Dendritic cell treated with granulocyte-macrophage colony-stimulating factor and Interleukin-4, amounts not matched to agents 40 ng/mL and 50 ng/mL, for 4 days (primary cell): ENCODE measurements at regions of chr3 and their contacts with region 1.

Region 1: DNA sequence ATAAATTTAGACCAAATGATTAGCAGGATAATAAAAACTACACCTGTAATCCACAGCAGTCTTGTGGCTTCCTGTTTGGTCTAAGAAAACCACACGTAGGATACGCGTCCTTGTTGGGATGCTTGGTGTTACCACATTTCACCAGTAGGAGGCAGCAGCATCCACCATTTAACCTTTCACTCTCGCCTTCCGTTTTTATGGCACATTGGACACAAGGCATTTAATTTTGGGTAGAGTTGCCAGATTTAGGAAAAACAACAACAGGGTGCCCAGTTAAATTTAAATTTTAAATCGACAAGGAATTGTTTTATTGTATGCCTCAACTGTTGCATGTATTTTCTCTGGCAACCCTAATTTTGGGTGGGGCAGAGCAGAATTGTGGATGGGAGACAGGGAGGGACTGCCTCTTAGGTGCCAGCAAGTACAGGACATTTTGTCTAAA is 6.3 kb downstream of the LRRC31 start:
- H3K4me3 Mint-ChIP-seq: no peak overlapping the region
- H3K27ac Mint-ChIP-seq: no peak overlapping the region
- H3K4me1 Mint-ChIP-seq: peaks cover 11% of the 10 kb centered on the region
- H3K27me3 Mint-ChIP-seq: peaks cover 9% of the 10 kb centered on the region

Region 2: DNA sequence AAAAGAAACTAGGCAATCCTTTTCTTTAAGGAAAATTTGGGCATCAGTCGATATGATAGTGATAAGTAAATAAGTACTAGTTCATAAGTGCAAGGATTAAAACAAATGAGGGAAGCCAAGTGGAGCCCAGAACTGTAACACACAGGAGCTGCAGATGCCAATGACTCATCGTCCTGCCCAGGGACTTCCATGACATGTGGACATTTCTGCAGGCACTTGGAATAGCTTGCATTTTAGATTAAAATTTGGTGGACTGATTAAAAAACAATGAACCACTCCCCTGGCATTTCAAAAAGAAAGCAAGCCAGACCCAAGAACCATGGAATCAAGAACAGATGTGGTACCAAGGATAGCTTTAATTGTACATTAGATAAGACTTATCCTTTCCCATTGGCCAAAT is 50.8 kb after region 1 on chr3:
- intact Hi-C with region 1: no loop called
- H3K4me3 Mint-ChIP-seq: no peak overlapping the region
- H3K27ac Mint-ChIP-seq: no peak overlapping the region
- H3K4me1 Mint-ChIP-seq: no peaks in the 10 kb centered on the region
- H3K27me3 Mint-ChIP-seq: no peaks in the 10 kb centered on the region

Region 3: DNA sequence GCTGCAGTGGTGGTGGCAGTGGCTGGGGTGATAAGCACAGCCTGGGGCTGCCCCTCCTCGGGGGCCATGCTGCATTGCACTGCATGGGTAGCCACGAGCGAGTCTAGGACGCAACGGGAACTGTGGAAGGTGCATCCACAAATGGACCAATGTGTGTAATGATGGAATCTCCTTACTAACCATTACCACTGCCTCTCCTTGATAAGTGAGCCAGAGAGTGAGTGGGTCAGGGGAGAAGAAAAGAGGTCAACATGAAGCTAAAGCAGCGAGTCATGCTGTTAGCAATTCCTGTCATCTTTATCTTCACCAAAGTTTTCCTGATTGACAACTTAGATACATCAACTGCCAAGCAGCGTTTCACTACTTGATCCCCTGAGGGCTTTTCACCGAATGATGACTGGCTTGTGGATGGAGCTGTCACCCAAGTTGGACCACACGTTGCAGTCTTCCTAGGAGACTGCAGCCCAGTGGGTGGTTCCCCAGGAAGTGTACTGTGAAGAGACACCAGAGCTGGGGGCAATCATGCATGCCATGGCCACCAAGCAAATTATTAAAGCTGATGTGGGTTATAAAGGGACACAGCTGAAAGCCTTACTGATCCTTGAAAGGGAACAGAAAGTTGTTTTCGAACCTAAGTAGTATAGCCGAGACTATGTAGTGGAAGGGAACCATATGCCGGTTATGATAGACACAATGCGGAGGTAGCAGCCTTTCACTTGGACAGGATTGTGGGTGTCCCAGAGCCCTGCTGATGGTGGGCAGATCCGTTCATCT is 68.5 kb after region 1 on chr3:
- intact Hi-C with region 1: no loop called
- H3K4me3 Mint-ChIP-seq: no peak overlapping the region
- H3K27ac Mint-ChIP-seq: no peak overlapping the region
- H3K4me1 Mint-ChIP-seq: peaks cover 5% of the 10 kb centered on the region
- H3K27me3 Mint-ChIP-seq: peaks cover 2% of the 10 kb centered on the region

Region 4: DNA sequence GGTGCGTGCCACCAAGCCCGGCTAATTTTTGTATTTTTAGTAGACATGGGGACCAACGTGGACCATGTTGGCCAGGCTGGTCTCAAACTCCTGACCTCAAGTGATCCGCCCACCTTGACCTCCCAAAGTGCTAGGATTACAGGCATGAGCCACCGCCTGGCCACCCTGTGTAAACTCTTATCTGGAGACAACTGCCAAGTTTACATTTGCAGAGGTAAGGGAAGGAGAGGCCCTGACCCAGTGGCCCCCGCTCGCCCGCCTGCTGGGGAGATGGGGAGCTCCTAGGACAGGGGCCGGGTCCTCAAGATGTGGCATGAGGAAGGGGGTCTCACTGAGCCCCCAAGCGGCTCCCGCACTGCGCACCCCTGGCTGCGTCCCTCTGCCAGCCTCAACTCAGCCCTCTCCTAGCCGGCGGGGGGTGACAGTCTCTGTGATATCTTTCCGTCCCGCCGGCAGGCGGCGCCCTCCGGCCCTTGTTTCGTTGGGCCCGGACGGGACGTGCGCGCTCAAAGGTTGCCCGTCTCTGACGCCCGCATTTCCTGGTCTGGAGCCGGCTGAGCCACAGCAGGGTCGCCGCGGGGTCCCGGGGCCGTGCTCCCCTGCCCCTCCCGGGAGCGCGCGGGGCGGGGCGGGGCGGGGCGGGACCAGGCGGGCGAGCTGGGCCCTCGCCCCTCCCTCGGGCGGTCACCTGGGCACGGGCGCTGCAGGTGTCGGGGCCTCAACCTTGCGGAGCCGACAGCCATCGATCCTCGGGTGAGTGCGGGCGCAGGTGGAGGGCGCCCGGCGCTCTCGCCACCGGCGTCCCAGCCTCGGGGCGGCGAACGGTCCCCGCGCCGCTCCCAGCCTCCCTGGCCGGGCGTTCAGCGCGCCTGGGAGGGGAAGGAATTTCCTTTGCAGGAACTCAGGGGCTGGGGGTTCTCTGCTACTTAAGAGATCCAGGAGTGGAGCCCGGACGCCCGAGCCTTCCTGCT is 174.3 kb after region 1 on chr3 and contains the start of gene GPR160:
- intact Hi-C with region 1: loop called (anchors 1 kb)
- H3K4me3 Mint-ChIP-seq: peak within 1 kb of the TSS; percentile 85
- H3K27ac Mint-ChIP-seq: peak within 1 kb of the TSS; percentile 78
- H3K4me1 Mint-ChIP-seq: peaks cover 47% of the 10 kb centered on the region
- H3K27me3 Mint-ChIP-seq: no peaks in the 10 kb centered on the region

Region 5: DNA sequence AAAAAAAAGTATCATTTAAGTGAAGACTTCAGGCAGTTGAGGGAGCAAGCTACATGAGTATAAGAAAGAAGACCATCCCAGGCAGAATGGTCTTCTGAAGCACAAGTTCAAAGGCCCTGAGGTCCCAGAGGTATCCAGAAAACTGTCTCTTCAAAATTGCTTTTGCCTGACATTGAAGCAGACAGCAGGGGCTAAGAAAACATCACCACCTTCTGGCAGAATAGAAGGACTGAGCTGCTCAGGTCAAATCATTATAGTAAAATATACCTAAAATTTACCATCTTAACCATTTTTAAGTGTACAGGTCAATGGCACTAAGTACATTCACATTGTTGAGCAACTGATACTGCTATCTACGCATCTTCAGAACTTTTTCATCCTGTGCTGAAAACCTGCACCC is 190.7 kb after region 1 on chr3:
- intact Hi-C with region 1: loop called (anchors 1 kb)
- H3K4me3 Mint-ChIP-seq: no peak overlapping the region
- H3K27ac Mint-ChIP-seq: peak overlapping the region; percentile 12
- H3K4me1 Mint-ChIP-seq: peaks cover 24% of the 10 kb centered on the region
- H3K27me3 Mint-ChIP-seq: no peaks in the 10 kb centered on the region

Region 6: DNA sequence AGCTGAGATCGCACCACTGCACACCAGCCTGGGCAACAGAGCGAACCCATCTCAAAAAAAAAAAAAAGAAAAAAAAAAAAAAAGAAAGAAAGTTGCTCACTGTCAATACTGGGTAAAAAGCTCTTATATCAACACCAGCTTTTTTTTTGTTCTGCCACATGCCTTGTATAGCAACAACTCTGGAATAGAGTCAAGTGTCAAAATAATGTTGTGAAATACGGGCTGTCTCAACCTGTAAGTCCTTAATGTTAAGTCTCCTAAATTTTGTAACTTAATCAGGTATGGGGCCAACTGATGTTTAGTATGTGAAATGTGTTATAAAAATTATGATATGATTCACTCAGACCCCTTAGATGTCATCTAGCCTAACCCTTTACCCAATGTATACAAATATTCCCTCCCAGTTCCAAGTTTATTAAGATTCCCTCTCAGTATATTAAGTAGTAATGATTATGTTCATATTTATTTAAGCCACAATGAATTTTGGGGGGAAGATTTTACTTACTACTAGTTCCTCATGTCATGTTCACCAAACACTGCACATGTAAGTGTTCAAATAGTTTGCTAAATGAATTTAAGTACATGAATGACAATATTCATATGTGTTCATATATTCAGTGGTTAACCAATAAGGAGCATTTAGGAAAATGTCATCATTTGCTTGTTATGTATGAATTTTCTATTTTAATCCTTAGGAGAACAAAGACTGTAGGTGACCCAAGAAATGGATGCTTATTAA is 226.6 kb after region 1 on chr3:
- intact Hi-C with region 1: loop called (anchors 10 kb)
- H3K4me3 Mint-ChIP-seq: no peak overlapping the region
- H3K27ac Mint-ChIP-seq: no peak overlapping the region
- H3K4me1 Mint-ChIP-seq: no peaks in the 10 kb centered on the region
- H3K27me3 Mint-ChIP-seq: no peaks in the 10 kb centered on the region